HEK293T (cell line): ENCODE measurements at regions of chr1 and their contacts with region 1.

Region 1: GRCh38 chr1:234610348-234611152 is 572 bp upstream of the IRF2BP2 start:
- DNase-seq: peak; percentile 81

Region 2: GRCh38 chr1:234499119-234499942 is 111.2 kb before region 1 on chr1:
- CTCF ChIA-PET with region 1: interaction called, 5 read pairs
- POLR2A ChIA-PET with region 1: interaction called, 43 read pairs
- DNase-seq: peak; percentile 91

Region 3: GRCh38 chr1:234544087-234544579 is 66.4 kb before region 1 on chr1:
- CTCF ChIA-PET with region 1: interaction called, 4 read pairs
- POLR2A ChIA-PET with region 1: interaction called, 20 read pairs
- DNase-seq: peak; percentile 55

Region 4: DNA sequence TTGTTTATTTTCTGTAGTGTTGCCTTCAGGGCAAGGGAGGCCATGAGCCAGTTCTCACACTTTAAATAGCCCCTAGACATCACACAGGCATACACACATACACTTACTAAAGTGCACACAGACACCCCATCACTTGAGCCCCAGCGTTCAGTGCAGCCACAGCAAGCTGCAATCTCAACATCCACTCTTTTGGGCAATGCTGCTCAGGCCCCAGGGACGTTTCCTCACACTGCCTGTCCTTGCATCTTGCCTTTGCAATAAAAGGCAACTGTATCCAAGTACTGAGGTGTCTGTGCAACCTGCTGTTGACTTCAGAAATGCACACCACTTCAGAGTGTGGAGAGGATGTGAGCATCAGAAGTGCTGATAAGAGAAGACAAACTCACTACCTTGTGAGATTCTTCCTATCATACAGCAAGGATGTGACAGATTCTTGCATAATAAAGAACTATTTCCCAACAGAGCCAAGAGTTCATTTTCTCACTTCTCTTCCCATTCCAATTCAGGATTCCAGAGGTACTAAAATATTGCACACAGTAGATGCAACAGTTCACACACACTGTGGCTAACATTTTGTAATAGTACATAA is 36.7 kb before region 1 on chr1:
- CTCF ChIA-PET with region 1: no interaction called
- POLR2A ChIA-PET with region 1: no interaction called
- DNase-seq: no peak

Region 5: GRCh38 chr1:234592242-234592641 is 18.3 kb before region 1 on chr1:
- CTCF ChIA-PET with region 1: no interaction called
- POLR2A ChIA-PET with region 1: no interaction called
- DNase-seq: no peak

Region 6: DNA sequence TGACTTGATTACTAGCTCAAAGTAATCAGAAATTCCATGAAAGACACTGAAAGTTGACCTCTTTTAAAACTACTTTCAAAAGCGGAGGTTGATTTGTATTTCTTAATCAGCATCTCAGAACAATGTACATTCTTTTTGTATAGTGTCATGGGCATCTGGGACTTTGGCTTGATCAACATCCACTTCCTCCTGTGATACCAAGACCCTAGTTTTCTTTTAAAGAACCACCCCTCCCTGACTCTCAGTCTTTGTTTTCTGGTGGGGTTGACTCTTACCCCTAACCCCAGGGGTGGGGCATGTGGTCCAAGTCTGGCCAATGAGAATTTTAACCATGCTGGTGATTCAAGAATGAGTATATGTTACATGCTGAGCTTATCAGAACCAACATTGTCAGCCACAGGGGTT is 21.2 kb after region 1 on chr1:
- CTCF ChIA-PET with region 1: interaction called, 4 read pairs
- POLR2A ChIA-PET with region 1: interaction called, 12 read pairs
- DNase-seq: no peak

Region 7: DNA sequence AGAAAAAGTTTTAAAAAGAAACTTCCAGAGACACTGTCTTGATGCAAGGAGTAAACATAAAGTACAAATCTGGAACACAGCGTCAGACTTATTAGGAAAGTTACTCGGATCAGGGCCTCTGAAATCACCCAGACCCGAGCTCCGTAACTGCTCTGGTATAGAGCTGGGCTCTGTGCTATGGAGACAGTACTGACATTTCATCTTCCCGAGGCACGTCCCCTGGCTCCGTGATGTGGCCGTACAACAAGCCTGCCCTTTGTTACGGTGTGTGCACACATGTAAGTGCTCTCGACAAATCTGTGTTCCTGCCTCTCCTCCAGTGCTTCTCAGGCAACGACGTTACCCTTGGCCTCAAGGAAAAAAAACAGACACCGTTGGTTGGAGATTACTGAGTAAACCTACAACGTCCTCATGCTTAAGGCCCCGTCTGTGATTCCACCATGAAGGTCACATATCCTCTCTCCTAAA is 106.4 kb after region 1 on chr1:
- CTCF ChIA-PET with region 1: interaction called, 4 read pairs
- POLR2A ChIA-PET with region 1: interaction called, 154 read pairs
- DNase-seq: no peak

Region 8: GRCh38 chr1:234755449-234755863 is 144.9 kb after region 1 on chr1:
- CTCF ChIA-PET with region 1: no interaction called
- POLR2A ChIA-PET with region 1: interaction called, 13 read pairs
- DNase-seq: no peak

Region 9: GRCh38 chr1:235093696-235094592 is 483.4 kb after region 1 on chr1:
- CTCF ChIA-PET with region 1: no interaction called
- POLR2A ChIA-PET with region 1: no interaction called
- DNase-seq: peak; percentile 86